ENCODE measurements at regions of chr4 and their contacts with region 1.

Region 1: GRCh38 chr4:1604711-1605205 is 79.4 kb downstream of the FAM53A start:
- DNase-seq: peak in 7 of 9 experiments; percentile 19 to 77 (median 51)
- ATAC-seq: peak; percentile 79
- H3K4me3 ChIP-seq: peak overlapping the region; percentile 24 to 37
- H3K4me3 Mint-ChIP-seq: peak overlapping the region; percentile 79
- H3K27ac ChIP-seq: peak overlapping the region in 1 of 2 experiments; percentile 41
- H3K27ac Mint-ChIP-seq: peak overlapping the region; percentile 92
- H3K4me1 ChIP-seq: peaks cover 29% of the 10 kb centered on the region
- H3K4me1 Mint-ChIP-seq: peaks cover 27% of the 10 kb centered on the region
- H3K27me3 ChIP-seq: no peaks in the 10 kb centered on the region
- H3K27me3 Mint-ChIP-seq: no peaks in the 10 kb centered on the region
- CTCF ChIP-seq: peak; percentile 31

Region 2: DNA sequence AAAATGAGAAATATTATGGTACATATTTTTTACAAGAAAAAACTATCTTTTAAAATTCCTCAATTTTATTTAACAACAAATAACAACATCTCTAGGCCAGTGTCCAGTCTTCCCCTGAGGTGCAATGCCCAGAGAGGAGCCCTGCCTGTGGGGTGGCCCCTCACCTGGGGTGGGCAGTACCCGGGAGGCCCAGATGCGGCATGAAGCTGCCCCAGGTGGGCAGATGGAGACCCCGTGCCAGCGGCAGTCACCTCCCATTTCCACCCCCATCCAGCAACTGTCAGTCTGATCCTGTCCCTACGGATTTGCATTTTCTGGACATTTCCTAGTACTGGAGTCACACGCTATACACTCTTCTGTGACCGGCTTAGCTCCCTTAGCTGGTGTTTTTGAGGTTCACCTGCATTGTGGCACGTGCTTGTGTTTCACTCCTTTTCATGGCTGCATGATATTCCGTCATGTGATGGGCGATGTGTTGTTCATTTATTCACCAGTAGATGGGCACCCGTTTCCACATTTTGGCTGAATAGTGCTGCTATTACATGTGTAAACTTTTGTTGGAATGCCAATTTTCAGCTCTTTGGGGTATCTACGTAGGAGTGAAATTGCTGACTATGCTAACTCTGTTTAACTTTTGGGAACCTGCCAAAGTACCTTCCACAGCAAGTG is 327.0 kb before region 1 on chr4:
- CTCF ChIA-PET with region 1: no interaction called
- POLR2A ChIA-PET with region 1: no interaction called
- intact Hi-C with region 1: loop called in 1 of 2 experiments (anchors 10 kb)
- DNase-seq: peak in 1 of 9 experiments; percentile 39
- ATAC-seq: no peak
- H3K4me3 ChIP-seq: no peak overlapping the region
- H3K4me3 Mint-ChIP-seq: no peak overlapping the region
- H3K27ac ChIP-seq: no peak overlapping the region
- H3K27ac Mint-ChIP-seq: no peak overlapping the region
- H3K4me1 ChIP-seq: no peaks in the 10 kb centered on the region
- H3K4me1 Mint-ChIP-seq: no peaks in the 10 kb centered on the region
- H3K27me3 ChIP-seq: no peaks in the 10 kb centered on the region
- H3K27me3 Mint-ChIP-seq: peaks cover 3% of the 10 kb centered on the region
- CTCF ChIP-seq: peak; percentile 38

Region 3: GRCh38 chr4:1318488-1319213 is 286.1 kb before region 1 on chr4:
- CTCF ChIA-PET with region 1: interaction called, 3 read pairs
- POLR2A ChIA-PET with region 1: no interaction called
- intact Hi-C with region 1: loop called in 1 of 2 experiments (anchors 1 kb)
- DNase-seq: peak in 6 of 9 experiments; percentile 20 to 63 (median 44)
- ATAC-seq: no peak
- H3K4me3 ChIP-seq: no peak overlapping the region
- H3K4me3 Mint-ChIP-seq: no peak overlapping the region
- H3K27ac ChIP-seq: no peak overlapping the region
- H3K27ac Mint-ChIP-seq: no peak overlapping the region
- H3K4me1 ChIP-seq: peaks cover 8% of the 10 kb centered on the region
- H3K4me1 Mint-ChIP-seq: peaks cover 13% of the 10 kb centered on the region
- H3K27me3 ChIP-seq: no peaks in the 10 kb centered on the region
- H3K27me3 Mint-ChIP-seq: no peaks in the 10 kb centered on the region
- CTCF ChIP-seq: peak; percentile 36

Region 4: DNA sequence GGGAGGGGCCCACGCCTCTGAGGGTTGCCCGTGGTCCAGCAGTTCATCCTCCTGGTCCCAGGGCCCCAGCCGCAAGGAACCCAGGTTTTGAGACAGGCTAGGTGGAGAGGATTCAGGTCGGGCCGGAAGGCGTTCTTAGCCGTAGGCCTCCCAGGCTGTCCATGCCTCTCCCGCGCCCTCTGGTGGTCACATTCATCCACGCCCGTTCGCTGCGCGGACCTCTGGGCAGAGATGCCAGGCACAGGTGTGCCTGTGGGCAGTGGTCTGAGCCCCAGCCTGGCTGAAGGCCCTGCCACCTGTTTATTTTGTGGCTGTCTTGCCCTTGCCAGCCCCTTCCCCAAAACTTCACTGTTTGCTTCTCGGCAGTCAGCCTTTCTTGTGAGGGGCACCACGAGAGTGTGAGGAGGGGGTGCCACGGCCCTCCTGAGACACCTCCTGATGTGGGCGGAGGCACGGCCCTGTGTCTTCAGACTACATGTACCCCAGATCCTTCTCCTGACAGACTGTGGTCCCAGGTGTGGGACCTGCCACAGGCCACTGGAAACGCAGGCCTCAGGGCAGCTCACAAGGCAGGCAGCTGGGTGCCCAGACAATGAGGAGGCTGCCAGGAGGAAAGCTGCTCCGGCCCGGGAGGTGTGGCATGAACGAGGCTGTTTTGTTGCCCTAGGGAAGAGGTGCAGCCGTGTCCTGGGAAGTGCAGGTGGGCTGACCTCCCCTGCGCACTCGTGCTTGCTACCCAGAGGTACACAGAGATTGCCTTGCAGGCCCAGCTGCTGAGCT is 252.7 kb before region 1 on chr4:
- CTCF ChIA-PET with region 1: interaction called, 62 read pairs
- POLR2A ChIA-PET with region 1: interaction called, 15 read pairs
- intact Hi-C with region 1: loop called (anchors 1 kb)
- DNase-seq: peak; percentile 78 to 96 (median 90)
- ATAC-seq: peak; percentile 30
- H3K4me3 ChIP-seq: no peak overlapping the region
- H3K4me3 Mint-ChIP-seq: no peak overlapping the region
- H3K27ac ChIP-seq: peak overlapping the region in 1 of 2 experiments; percentile 28
- H3K27ac Mint-ChIP-seq: peak overlapping the region; percentile 72
- H3K4me1 ChIP-seq: peaks cover 21% of the 10 kb centered on the region
- H3K4me1 Mint-ChIP-seq: peaks cover 33% of the 10 kb centered on the region
- H3K27me3 ChIP-seq: no peaks in the 10 kb centered on the region
- H3K27me3 Mint-ChIP-seq: no peaks in the 10 kb centered on the region
- CTCF ChIP-seq: peak; percentile 85

Region 5: DNA sequence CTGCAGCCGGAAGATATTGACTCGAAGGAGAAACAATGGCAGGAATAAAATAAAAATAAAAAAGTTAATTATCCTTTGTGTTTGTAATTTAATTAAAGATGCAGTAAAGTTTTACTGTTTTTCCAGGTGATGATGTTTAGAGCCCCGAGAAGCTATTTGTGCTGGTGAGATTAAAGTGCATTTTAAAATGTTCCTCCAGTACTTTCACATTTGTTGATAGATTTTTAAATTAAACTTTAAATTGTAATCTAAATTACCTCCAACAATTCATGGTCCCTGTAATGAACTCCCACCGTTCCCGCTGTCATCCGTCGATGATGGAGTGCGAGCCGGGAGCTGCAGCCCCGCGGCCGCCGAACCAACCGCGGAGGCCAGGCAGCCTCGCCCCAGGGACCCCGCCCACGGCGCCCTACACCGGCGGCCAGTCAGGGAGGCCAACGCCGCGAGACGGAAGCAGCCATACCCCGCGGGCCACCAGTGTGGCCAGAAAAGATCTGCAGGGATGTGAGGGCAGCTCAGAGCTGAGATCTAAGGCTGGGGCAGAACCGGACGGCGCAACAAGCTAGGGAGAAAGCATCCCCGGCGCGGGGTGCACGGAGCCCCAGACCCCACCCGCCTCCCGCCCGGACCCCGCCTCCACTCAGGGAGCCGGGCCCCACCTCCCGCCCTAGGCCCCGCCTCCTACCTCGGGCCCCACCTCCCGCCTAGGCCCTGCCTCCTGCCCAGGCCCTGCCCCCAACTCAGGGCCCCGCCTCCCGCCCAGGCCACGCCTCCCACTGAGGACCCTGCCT is 24.7 kb before region 1 on chr4:
- CTCF ChIA-PET with region 1: interaction called, 7 read pairs
- POLR2A ChIA-PET with region 1: interaction called, 20 read pairs
- intact Hi-C with region 1: loop called (anchors 1 kb)
- DNase-seq: peak; percentile 83 to 96 (median 93)
- ATAC-seq: peak; percentile 82
- H3K4me3 ChIP-seq: peak overlapping the region; percentile 70 to 78
- H3K4me3 Mint-ChIP-seq: peak overlapping the region; percentile 79
- H3K27ac ChIP-seq: peak overlapping the region; percentile 66 to 73
- H3K27ac Mint-ChIP-seq: peak overlapping the region; percentile 79
- H3K4me1 ChIP-seq: no peaks in the 10 kb centered on the region
- H3K4me1 Mint-ChIP-seq: peaks cover 11% of the 10 kb centered on the region
- H3K27me3 ChIP-seq: no peaks in the 10 kb centered on the region
- H3K27me3 Mint-ChIP-seq: no peaks in the 10 kb centered on the region
- CTCF ChIP-seq: no peak

Region 6: GRCh38 chr4:1628892-1629698 is 24.3 kb after region 1 on chr4:
- CTCF ChIA-PET with region 1: interaction called, 14 read pairs
- POLR2A ChIA-PET with region 1: no interaction called
- intact Hi-C with region 1: loop called in 1 of 2 experiments (anchors 2 kb)
- DNase-seq: peak; percentile 51 to 81 (median 69)
- ATAC-seq: peak; percentile 93
- H3K4me3 ChIP-seq: no peak overlapping the region
- H3K4me3 Mint-ChIP-seq: no peak overlapping the region
- H3K27ac ChIP-seq: no peak overlapping the region
- H3K27ac Mint-ChIP-seq: no peak overlapping the region
- H3K4me1 ChIP-seq: no peaks in the 10 kb centered on the region
- H3K4me1 Mint-ChIP-seq: no peaks in the 10 kb centered on the region
- H3K27me3 ChIP-seq: no peaks in the 10 kb centered on the region
- H3K27me3 Mint-ChIP-seq: no peaks in the 10 kb centered on the region
- CTCF ChIP-seq: peak; percentile 95

Measured in CD8-positive, alpha-beta T cell (primary cell).